ENCODE measurements at regions of chr1 and their contacts with region 1.

Region 1: DNA sequence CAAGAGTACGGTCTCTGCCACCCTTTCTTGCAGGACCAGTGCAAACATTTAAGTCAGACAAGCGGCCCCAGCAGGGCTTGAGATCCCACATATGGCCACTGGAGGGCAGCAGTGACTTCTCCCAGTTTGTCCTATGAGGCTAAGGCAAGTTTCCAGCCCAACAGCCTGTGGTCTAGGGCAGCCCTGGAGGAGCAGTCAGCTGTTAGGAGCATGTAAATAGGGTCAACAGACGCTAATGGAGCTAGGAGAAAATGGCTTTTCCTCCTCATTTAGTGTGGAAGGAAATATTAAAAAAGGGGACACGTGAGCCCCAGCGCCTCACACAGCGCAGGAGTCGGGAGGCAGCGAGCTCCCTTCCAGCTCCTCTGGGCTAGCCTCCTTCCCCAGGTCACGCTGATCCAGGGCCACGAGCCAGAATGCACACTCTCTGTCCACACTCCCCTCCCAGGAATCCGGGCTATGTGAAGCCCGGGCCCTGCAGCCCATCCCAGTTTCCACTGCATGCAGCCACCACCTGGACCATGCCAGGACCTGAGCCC is 95.6 kb downstream of the LAMC2 start:
- DNase-seq: peak; percentile 72
- H3K4me3 ChIP-seq: no peak overlapping the region
- H3K27me3 ChIP-seq: no peaks in the 10 kb centered on the region
- CTCF ChIP-seq: peak; percentile 82

Region 2: DNA sequence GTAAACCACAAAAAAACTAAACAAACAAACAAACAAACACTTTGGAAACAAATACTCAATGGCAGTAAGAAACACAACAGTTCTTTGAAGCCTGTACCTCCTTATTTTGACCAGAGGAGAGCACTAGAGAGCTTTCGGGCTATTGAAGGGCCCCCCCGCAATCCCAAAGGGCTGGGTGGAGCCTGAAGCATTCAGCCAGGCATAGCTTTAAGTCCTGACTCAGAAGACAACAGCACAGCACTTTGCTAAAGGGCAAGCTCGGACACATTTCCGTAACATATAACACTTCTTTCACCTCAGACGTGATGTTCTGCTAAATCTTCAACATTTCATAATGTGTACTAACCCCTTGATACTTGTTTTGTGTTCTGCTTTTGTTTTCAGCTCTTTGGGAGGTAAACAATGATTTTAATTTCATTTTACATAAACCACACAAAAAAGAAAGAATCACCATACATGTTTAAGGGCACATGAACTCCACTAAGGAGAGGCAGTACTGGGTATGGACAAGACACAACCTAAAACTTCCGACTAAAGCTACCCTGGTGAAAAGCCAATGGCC is 319.0 kb before region 1 on chr1:
- CTCF ChIA-PET with region 1: interaction called, 15 read pairs
- POLR2A ChIA-PET with region 1: interaction called, 5 read pairs
- DNase-seq: peak; percentile 57
- H3K4me3 ChIP-seq: 0 out of 2 replicates have a peak overlapping the region, but pooled peaks have one; percentile 1
- H3K27me3 ChIP-seq: no peaks in the 10 kb centered on the region
- CTCF ChIP-seq: peak; percentile 91

Region 3: DNA sequence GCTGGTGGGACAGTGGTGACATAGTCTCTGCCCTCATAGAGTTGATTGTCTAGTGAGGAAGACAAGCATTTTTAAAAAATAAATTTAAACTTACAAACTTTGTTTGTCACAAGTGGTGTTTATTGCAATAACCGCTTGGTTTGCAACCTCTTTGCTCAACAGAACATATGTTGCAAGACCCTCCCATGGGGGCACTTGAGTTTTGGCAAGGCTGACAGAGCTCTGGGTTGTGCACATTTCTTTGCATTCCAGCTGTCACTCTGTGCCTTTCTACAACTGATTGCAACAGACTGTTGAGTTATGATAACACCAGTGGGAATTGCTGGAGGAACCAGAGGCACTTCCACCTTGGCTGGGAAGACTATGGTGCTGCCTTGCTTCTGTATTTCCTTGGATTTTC is 37.2 kb before region 1 on chr1:
- CTCF ChIA-PET with region 1: interaction called, 36 read pairs
- POLR2A ChIA-PET with region 1: interaction called, 12 read pairs
- DNase-seq: no peak
- H3K4me3 ChIP-seq: no peak overlapping the region
- H3K27me3 ChIP-seq: no peaks in the 10 kb centered on the region
- CTCF ChIP-seq: no peak

Region 4: DNA sequence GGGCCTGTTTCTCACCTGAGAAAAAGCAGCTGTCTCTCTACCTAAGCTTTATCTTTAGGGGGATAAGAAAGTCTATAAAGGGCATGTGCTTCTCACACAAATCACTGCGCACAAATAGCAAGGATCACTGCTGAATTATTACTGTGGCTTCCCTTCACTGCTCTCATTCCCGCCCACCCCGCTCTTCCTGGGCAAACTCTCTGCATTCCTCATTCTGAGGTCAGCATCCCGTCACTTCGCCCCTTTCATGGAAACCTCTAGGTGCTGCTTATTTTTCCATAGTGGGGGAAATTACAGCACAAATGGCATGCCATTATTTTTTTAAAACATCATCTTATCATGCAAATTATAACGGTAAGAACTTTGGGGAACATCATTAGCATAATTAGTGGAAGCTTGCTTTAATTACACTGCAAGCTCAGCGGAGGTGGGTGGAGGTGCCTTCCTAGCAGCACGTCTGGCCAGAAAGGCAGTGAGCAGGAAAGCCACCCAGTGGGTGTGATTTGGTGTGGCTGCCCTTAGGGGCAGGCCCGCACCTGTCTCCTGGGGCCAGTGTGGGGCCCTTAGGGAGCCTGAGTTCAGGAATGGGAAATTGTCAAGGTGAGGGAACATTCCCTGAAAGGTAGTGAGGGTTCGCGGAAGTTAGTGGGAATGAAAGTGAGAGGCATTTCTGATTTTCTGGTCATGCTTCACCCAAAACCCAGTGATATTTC is 10.3 kb after region 1 on chr1:
- CTCF ChIA-PET with region 1: interaction called, 14 read pairs
- POLR2A ChIA-PET with region 1: no interaction called
- DNase-seq: no peak
- H3K4me3 ChIP-seq: no peak overlapping the region
- H3K27me3 ChIP-seq: no peaks in the 10 kb centered on the region
- CTCF ChIP-seq: no peak

Region 5: DNA sequence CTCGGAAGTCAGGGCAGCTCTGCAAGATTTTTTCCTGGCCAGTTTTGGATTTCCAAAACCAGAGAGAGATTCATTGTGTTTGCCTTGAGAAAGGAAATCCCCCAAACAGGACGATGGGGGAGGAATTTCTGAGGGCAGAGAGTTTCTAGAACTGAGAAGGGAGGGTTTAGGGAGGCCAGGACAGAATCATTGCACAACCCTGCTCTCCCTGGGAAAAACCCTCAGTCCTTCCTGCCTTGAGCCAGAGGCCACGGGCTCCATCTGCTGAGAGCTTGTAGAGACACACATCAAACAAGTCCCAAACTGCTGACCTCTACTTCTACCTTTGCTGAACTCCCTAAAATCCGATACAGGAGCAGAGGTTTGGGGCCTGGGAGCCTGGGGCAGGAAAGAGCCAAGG is 36.8 kb after region 1 on chr1:
- CTCF ChIA-PET with region 1: interaction called, 36 read pairs
- POLR2A ChIA-PET with region 1: no interaction called
- DNase-seq: peak; percentile 58
- H3K4me3 ChIP-seq: no peak overlapping the region
- H3K27me3 ChIP-seq: no peaks in the 10 kb centered on the region
- CTCF ChIP-seq: peak; percentile 87